ENCODE measurements at regions of chr10 and their contacts with region 1.

Region 1: GRCh38 chr10:129883626-129884396 is 80.3 kb downstream of the EBF3 start:
- DNase-seq: no peak
- ATAC-seq: peak in 1 of 2 donors; percentile 15
- H3K4me3 ChIP-seq: no peak overlapping the region
- H3K27ac ChIP-seq: no peak overlapping the region
- H3K4me1 ChIP-seq: no peaks in the 10 kb centered on the region
- H3K27me3 ChIP-seq: no peaks in the 10 kb centered on the region

Region 2: GRCh38 chr10:129971381-129972144 is 87.8 kb after region 1 on chr10:
- intact Hi-C with region 1: loop called in 1 of 4 experiments (anchors 5 kb)
- DNase-seq: peak; percentile 75 to 90 (median 86)
- ATAC-seq: peak; percentile 89 to 92
- H3K4me3 ChIP-seq: peak overlapping the region; percentile 62
- H3K27ac ChIP-seq: no peak overlapping the region
- H3K4me1 ChIP-seq: no peaks in the 10 kb centered on the region
- H3K27me3 ChIP-seq: no peaks in the 10 kb centered on the region

Region 3: GRCh38 chr10:130136226-130137089 is 252.6 kb after region 1 on chr10 and contains the start of gene GLRX3:
- intact Hi-C with region 1: no loop called
- DNase-seq: peak; percentile 93 to 98 (median 96)
- ATAC-seq: peak; percentile 97
- H3K4me3 ChIP-seq: peak within 1 kb of the TSS; percentile 85
- H3K27ac ChIP-seq: peak within 1 kb of the TSS; percentile 83
- H3K4me1 ChIP-seq: peaks cover 4% of the 10 kb centered on the region
- H3K27me3 ChIP-seq: no peaks in the 10 kb centered on the region
- total RNA-seq, gene GLRX3: 52.8 to 60.0 (median 57.0) TPM